ENCODE measurements at regions of chr20 and their contacts with region 1.

Region 1: GRCh38 chr20:33299111-33299603 is 16.1 kb downstream of the BPIFB1 start:
- DNase-seq: peak; percentile 54
- H3K4me3 ChIP-seq: no peak overlapping the region
- H3K27ac ChIP-seq: no peak overlapping the region
- H3K4me1 ChIP-seq: no peaks in the 10 kb centered on the region
- H3K27me3 ChIP-seq: peaks cover 0 to 4% of the 10 kb centered on the region in 2 experiments
- CTCF ChIP-seq: peak; percentile 93 to 97
- POLR2A ChIP-seq: no peak

Region 2: DNA sequence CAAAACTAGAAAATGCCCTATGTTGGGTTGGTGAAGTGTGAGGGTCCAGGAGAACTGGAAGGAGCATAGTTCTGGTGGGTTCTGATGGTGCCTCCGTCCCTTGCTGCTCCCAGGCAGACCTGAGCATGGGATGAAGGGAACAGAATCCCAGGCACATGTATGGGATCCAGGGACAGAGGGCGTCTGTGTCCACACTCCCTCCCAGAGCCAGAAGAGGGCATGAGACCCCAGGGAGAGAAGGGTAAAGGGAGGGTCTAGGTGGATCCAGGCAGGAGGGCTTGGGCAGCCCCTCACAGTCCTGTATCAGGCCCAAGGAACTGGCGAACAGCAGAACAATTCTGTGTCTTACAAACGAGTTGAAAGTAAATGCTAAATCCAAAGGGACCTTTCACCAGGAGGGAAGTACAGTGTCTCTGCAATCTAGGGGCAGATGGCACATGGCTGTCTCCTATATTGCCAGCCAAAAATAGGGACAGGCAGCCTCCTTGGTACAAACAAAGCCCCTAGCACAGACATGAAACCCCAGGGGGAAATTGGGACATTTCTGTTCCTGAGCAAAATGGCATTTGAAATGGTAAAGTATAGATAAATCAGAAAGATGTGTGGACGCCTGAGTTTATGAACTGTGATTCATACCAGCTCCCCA is 65.9 kb before region 1 on chr20:
- CTCF ChIA-PET with region 1: no interaction called
- POLR2A ChIA-PET with region 1: no interaction called
- dilution Hi-C with region 1: no loop called
- intact Hi-C with region 1: loop called (anchors 2 kb)
- DNase-seq: no peak
- H3K4me3 ChIP-seq: no peak overlapping the region
- H3K27ac ChIP-seq: no peak overlapping the region
- H3K4me1 ChIP-seq: no peaks in the 10 kb centered on the region
- H3K27me3 ChIP-seq: peaks cover 0 to 1% of the 10 kb centered on the region in 2 experiments
- CTCF ChIP-seq: no peak
- POLR2A ChIP-seq: no peak

Region 3: GRCh38 chr20:33262658-33263065 is 36.5 kb before region 1 on chr20:
- CTCF ChIA-PET with region 1: interaction called, 18 read pairs
- POLR2A ChIA-PET with region 1: no interaction called
- dilution Hi-C with region 1: no loop called
- intact Hi-C with region 1: no loop called
- DNase-seq: peak; percentile 40
- H3K4me3 ChIP-seq: no peak overlapping the region
- H3K27ac ChIP-seq: no peak overlapping the region
- H3K4me1 ChIP-seq: peaks cover 3% of the 10 kb centered on the region
- H3K27me3 ChIP-seq: no peaks in the 10 kb centered on the region
- CTCF ChIP-seq: peak; percentile 41 to 53
- POLR2A ChIP-seq: no peak

Region 4: DNA sequence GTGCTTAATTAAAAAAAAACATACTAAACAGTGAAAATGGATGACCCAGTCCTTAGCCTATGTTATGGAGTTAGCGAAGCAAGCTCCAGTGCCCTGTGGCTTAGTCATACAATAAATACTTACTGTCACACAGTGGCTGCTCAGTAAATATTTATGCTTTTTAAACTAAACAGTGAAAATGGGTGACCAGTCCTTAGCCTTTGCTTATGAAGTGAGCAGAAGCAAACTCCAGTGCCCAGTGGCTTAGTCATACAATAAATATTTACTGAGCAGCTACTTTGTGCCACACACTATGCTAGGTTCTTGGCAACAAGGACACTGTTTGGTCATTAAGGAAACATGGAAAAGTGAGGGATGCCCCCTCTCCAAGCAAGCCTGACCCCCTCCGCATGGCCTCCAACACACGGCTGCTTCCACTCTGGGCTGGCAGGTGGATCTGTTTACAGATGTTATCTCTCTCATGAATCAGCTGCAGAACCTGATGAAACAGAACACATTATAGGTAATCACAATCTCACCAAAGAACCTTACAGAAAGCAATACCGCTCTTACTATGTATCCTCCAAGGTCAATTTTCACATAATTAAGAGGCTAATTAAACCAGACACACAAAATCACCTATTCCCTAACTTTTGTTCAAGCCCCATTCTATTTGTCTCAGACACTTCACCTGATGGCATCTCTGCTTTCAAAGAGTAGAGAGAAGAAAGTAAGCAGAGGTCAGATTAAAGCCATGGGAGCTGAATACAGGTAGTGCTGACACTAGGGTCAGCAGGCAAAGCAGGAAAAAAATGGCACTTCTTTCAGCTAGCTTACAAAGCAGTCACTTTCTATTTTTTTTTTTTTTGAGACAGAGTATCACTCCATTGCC is 74.8 kb after region 1 on chr20:
- CTCF ChIA-PET with region 1: no interaction called
- POLR2A ChIA-PET with region 1: no interaction called
- dilution Hi-C with region 1: no loop called
- intact Hi-C with region 1: no loop called
- DNase-seq: peak; percentile 11
- H3K4me3 ChIP-seq: no peak overlapping the region
- H3K27ac ChIP-seq: no peak overlapping the region
- H3K4me1 ChIP-seq: no peaks in the 10 kb centered on the region
- H3K27me3 ChIP-seq: no peaks in the 10 kb centered on the region
- CTCF ChIP-seq: no peak
- POLR2A ChIP-seq: no peak

Measured in endothelial cell of umbilical vein (primary cell).